ENCODE measurements at regions of chr1 and their contacts with region 1.

Region 1: DNA sequence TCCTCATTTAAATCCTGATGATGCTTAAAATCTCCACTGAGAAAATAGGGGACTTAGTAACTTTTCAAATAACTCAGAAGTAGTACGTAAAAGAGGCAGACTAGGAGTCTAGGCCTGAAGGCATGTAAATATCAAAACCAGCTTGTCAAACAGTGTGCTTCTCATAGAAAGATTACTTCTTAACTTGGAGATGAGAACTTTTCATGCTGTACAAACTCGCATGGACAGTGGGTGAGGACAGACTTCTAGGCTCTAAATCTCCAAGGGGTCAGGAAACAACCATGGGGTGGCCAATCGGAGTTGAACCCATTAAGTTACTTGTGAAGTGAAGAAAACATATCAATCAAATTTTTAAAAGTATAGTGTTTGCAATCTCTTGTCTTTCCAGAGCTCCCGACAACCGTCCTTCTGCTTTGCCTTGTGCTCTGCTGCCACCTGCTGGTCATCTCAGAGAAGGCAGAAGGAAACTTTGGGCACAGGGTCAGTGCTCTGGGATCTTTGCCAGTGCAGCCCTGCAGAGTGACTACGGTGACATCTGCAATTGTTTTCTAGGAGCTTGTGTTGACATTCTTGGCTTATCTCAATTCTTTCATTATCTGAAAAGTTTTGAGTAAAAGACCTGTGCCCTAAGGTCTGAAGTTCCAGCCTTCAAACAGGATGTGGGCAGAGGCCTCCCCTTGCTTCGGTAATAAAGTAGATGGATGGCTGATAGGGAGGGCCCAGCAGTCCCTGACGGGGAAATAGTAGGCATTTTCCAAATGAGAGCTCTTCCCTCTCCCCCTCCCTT is 105.1 kb upstream of the PDE4B start:
- DNase-seq: peak; percentile 60
- ATAC-seq: peak; percentile 90
- H3K4me3 ChIP-seq: no peak overlapping the region
- H3K27ac ChIP-seq: no peak overlapping the region
- H3K4me1 ChIP-seq: peaks cover 2% of the 10 kb centered on the region; the same call in 1 of the 2 replicates
- H3K27me3 ChIP-seq: peaks cover 7% of the 10 kb centered on the region
- CTCF ChIP-seq: peak; percentile 94
- POLR2A ChIP-seq: no peak
- RAD21 ChIP-seq: peak; percentile 98

Region 2: DNA sequence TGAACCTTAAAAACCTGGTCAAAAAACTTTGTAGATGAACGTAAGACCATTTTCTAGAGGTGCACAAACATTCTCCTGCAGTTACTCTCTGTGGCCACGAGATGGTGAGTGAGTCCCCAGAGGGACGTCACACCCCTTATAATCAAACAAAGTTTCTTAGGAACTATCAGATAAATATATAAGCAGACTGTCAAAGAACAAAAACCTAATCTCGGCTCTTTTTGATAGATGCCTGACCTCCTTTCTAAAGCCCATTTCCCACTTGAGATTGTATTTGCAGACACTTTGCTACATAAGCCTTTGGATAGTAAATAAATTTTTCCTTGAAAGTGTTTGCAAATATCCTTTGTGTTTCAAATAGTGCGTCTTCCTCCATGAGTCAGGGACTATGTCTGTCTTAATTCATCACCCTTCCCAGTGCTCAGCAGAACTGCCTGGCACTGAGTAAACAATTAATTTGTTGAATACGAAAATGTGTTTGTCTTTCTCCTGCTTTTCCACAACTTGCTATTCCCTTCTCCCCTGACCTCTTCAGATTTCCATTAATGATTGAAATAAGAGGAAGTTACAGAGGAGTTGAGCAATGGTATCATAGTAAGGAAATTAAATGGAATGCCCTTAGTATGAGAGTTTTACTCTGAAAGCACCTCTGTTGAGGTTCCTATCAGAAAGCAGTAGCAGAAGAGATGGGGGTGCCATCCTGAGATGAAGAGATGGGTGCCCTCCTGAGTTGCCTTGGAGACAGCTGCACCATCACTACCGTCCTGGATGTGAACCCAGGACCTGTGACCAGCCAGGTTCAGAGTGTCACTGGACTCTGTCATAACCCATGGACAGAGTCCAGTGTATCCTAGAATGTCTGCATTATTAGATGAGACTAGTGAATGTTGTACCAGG is 1000.5 kb before region 1 on chr1:
- CTCF ChIA-PET with region 1: no interaction called
- POLR2A ChIA-PET with region 1: no interaction called
- dilution Hi-C with region 1: no loop called
- in situ Hi-C with region 1: no loop called
- intact Hi-C with region 1: loop called (anchors 5 kb)
- DNase-seq: peak; percentile 65
- ATAC-seq: peak; percentile 87
- H3K4me3 ChIP-seq: no peak overlapping the region
- H3K27ac ChIP-seq: no peak overlapping the region
- H3K4me1 ChIP-seq: peaks cover 12% of the 10 kb centered on the region
- H3K27me3 ChIP-seq: no peaks in the 10 kb centered on the region
- CTCF ChIP-seq: peak; percentile 84
- POLR2A ChIP-seq: no peak
- RAD21 ChIP-seq: peak; percentile 69

Region 3: GRCh38 chr1:65059930-65060538 is 627.6 kb before region 1 on chr1:
- CTCF ChIA-PET with region 1: interaction called, 3 read pairs
- POLR2A ChIA-PET with region 1: no interaction called
- dilution Hi-C with region 1: no loop called
- in situ Hi-C with region 1: no loop called
- intact Hi-C with region 1: loop called (anchors 1 kb)
- DNase-seq: peak; percentile 61
- ATAC-seq: peak; percentile 91
- H3K4me3 ChIP-seq: no peak overlapping the region
- H3K27ac ChIP-seq: no peak overlapping the region
- H3K4me1 ChIP-seq: no peaks in the 10 kb centered on the region
- H3K27me3 ChIP-seq: no peaks in the 10 kb centered on the region
- CTCF ChIP-seq: peak; percentile 62
- POLR2A ChIP-seq: no peak
- RAD21 ChIP-seq: peak; percentile 60

Region 4: DNA sequence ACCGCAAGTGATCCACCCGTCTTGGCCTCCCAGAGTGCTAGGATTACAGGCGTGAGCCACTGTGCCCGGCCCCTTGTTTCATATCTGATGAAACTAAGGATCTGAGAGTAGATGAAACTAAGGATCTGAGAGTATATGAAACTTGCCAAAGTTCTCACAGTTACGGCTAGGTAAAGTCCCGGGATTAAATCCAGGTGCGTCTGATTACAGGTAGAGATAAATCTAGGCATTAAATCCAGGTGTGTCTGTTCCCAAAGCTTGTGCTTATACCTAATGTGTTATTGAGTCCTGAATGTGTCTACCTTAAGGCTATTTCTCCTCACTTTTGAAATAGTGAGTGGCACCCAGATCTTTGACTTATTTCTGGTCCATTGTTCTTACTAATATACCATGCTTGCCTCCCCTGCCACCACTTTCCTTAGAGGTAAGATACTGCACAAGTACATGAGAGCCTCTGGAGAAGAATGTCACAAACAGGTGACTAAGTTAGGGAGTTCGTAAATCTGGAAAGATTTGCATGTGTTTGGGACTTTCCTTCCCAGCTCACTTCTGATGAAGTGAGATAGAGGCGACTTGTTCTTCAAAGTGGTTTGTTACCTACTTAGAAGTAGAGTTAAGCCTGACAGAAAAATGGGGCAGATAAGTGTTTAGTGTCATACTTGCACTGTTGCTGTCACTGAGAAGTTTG is 473.1 kb before region 1 on chr1:
- CTCF ChIA-PET with region 1: interaction called, 9 read pairs
- POLR2A ChIA-PET with region 1: no interaction called
- dilution Hi-C with region 1: no loop called
- in situ Hi-C with region 1: loop called (anchors 10 kb)
- intact Hi-C with region 1: loop called (anchors 1 kb)
- DNase-seq: no peak
- ATAC-seq: no peak
- H3K4me3 ChIP-seq: no peak overlapping the region
- H3K27ac ChIP-seq: no peak overlapping the region
- H3K4me1 ChIP-seq: no peaks in the 10 kb centered on the region
- H3K27me3 ChIP-seq: no peaks in the 10 kb centered on the region
- CTCF ChIP-seq: no peak
- POLR2A ChIP-seq: no peak
- RAD21 ChIP-seq: no peak

Region 5: GRCh38 chr1:65703853-65704252 is 16.2 kb after region 1 on chr1:
- CTCF ChIA-PET with region 1: interaction called, 15 read pairs
- POLR2A ChIA-PET with region 1: no interaction called
- dilution Hi-C with region 1: no loop called
- in situ Hi-C with region 1: no loop called
- intact Hi-C with region 1: no loop called
- DNase-seq: no peak
- ATAC-seq: no peak
- H3K4me3 ChIP-seq: no peak overlapping the region
- H3K27ac ChIP-seq: no peak overlapping the region
- H3K4me1 ChIP-seq: no peaks in the 10 kb centered on the region
- H3K27me3 ChIP-seq: peaks cover 17% of the 10 kb centered on the region
- CTCF ChIP-seq: no peak
- POLR2A ChIP-seq: no peak
- RAD21 ChIP-seq: no peak

Measured in IMR-90 (cell line).